IMR-90 (cell line): ENCODE measurements at regions of chr1 and their contacts with region 1.

Region 1: GRCh38 chr1:94329986-94330385 is 88.2 kb upstream of the ABCD3 start:
- DNase-seq: peak; percentile 54
- ATAC-seq: peak; percentile 3; the same call in 1 of the 2 replicates
- H3K4me3 ChIP-seq: no peak overlapping the region
- H3K27ac ChIP-seq: no peak overlapping the region
- H3K4me1 ChIP-seq: peaks cover 29% of the 10 kb centered on the region
- H3K27me3 ChIP-seq: no peaks in the 10 kb centered on the region
- CTCF ChIP-seq: peak; percentile 55
- POLR2A ChIP-seq: no peak
- RAD21 ChIP-seq: peak; percentile 66

Region 2: DNA sequence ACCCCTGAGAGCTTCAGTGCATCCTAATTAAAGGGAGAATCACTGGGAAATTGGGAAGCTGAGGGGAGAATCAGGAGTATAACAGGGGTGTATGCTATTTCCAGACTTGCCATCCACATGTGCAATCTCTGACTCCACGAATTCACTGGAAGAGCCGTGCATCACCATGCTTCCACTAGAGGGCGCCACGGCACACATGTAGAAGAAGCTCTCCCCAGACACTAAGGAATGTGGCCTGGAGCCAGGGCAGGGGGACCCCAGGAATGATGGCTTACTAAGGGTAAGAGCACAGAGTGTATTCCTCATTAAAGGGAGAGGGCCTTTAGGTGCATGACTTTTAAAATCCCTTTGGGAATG is 290.5 kb before region 1 on chr1:
- CTCF ChIA-PET with region 1: interaction called, 64 read pairs
- POLR2A ChIA-PET with region 1: no interaction called
- dilution Hi-C with region 1: no loop called
- in situ Hi-C with region 1: no loop called
- intact Hi-C with region 1: loop called (anchors 2 kb)
- DNase-seq: peak; percentile 62
- ATAC-seq: peak; percentile 22; the same call in 1 of the 2 replicates
- H3K4me3 ChIP-seq: no peak overlapping the region
- H3K27ac ChIP-seq: no peak overlapping the region
- H3K4me1 ChIP-seq: peaks cover 28% of the 10 kb centered on the region
- H3K27me3 ChIP-seq: no peaks in the 10 kb centered on the region
- CTCF ChIP-seq: peak; percentile 71
- POLR2A ChIP-seq: no peak
- RAD21 ChIP-seq: peak; percentile 59

Region 3: GRCh38 chr1:94186946-94187345 is 143.0 kb before region 1 on chr1:
- CTCF ChIA-PET with region 1: no interaction called
- POLR2A ChIA-PET with region 1: no interaction called
- dilution Hi-C with region 1: no loop called
- in situ Hi-C with region 1: no loop called
- intact Hi-C with region 1: loop called (anchors 5 kb)
- DNase-seq: no peak
- ATAC-seq: no peak
- H3K4me3 ChIP-seq: no peak overlapping the region
- H3K27ac ChIP-seq: no peak overlapping the region
- H3K4me1 ChIP-seq: no peaks in the 10 kb centered on the region
- H3K27me3 ChIP-seq: no peaks in the 10 kb centered on the region
- CTCF ChIP-seq: no peak
- POLR2A ChIP-seq: no peak
- RAD21 ChIP-seq: no peak

Region 4: GRCh38 chr1:94237291-94238226 is 92.4 kb before region 1 on chr1 and contains the start of gene ARHGAP29:
- CTCF ChIA-PET with region 1: interaction called, 9 read pairs
- POLR2A ChIA-PET with region 1: no interaction called
- dilution Hi-C with region 1: no loop called
- in situ Hi-C with region 1: loop called (anchors 5 kb)
- intact Hi-C with region 1: loop called (anchors 2 kb)
- DNase-seq: peak; percentile 50
- ATAC-seq: peak; percentile 96
- H3K4me3 ChIP-seq: peak within 1 kb of the TSS; percentile 60
- H3K27ac ChIP-seq: peak within 1 kb of the TSS; percentile 27
- H3K4me1 ChIP-seq: peaks cover 1% of the 10 kb centered on the region; the same call in 1 of the 2 replicates
- H3K27me3 ChIP-seq: no peaks in the 10 kb centered on the region; the same call in 1 of the 2 replicates
- CTCF ChIP-seq: no peak
- POLR2A ChIP-seq: no peak
- RAD21 ChIP-seq: no peak
- total RNA-seq, gene ARHGAP29: 30.3 and 45.3 TPM in 2 replicates

Region 5: DNA sequence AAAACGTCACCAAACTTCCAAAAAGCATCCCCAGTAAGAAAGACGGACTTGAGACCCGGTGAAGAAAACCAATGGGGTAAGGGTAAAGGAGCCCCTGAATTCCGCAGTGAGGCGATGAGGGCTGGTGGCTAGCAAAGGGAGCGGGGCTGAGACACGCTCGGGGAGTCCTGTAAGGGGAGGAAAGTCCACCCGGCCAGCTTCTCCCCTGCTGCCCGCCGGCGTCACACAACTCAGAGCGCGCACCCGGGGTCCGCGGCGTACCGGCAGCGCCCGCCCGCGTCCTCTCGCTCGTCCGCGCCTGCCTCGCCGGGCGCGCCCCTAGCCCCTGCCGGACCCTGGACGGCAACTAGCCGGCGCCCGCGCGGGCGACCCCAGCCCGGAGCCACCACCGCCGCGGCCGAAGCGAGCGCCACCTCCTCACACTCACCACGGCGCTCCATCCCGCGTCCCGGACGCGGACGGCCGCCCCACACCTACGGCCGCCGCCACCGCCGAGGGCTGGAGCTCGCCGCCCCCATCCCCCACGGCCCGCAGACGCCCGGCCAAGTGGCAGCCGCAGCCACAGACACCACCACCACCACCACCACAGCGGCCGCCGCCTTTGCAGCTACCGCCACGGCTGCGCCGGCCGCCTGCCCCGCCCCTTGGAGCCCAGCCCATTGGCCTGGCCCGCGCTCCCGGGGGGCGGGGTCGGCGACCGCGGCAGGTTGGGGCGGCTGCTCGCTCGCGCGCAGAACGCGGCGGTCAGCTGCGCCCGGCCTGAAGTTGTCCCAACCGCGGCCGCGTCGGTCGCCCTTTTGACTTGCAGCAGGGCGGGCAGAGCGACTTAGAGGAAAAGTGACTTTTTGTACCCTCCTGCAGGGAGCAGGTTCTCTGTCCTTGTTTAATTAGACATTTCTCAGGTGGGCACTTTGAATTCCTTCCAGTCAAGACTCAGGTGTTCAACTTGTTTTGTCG is 82.6 kb before region 1 on chr1:
- CTCF ChIA-PET with region 1: interaction called, 6 read pairs
- POLR2A ChIA-PET with region 1: no interaction called
- dilution Hi-C with region 1: no loop called
- in situ Hi-C with region 1: loop called (anchors 5 kb)
- intact Hi-C with region 1: loop called (anchors 1 kb)
- DNase-seq: peak; percentile 36
- ATAC-seq: peak; percentile 94
- H3K4me3 ChIP-seq: peak overlapping the region; percentile 83
- H3K27ac ChIP-seq: peak overlapping the region; percentile 17; the same call in 1 of the 2 replicates
- H3K4me1 ChIP-seq: no peaks in the 10 kb centered on the region
- H3K27me3 ChIP-seq: no peaks in the 10 kb centered on the region
- CTCF ChIP-seq: no peak
- POLR2A ChIP-seq: no peak
- RAD21 ChIP-seq: 0 out of 2 replicates have a peak, but pooled peaks have one; percentile 1

Region 6: GRCh38 chr1:94854458-94855306 is 524.7 kb after region 1 on chr1:
- CTCF ChIA-PET with region 1: no interaction called
- POLR2A ChIA-PET with region 1: no interaction called
- dilution Hi-C with region 1: no loop called
- in situ Hi-C with region 1: no loop called
- intact Hi-C with region 1: no loop called
- DNase-seq: peak; percentile 92
- ATAC-seq: peak; percentile 96
- H3K4me3 ChIP-seq: peak overlapping the region; percentile 41
- H3K27ac ChIP-seq: peak overlapping the region; percentile 38
- H3K4me1 ChIP-seq: peaks cover 5% of the 10 kb centered on the region
- H3K27me3 ChIP-seq: no peaks in the 10 kb centered on the region
- CTCF ChIP-seq: peak; percentile 97
- POLR2A ChIP-seq: peak; percentile 54; the same call in 1 of the 2 replicates
- RAD21 ChIP-seq: peak; percentile 97